A673 (cell line): ENCODE measurements at regions of chr4 and their contacts with region 1.

Region 1: DNA sequence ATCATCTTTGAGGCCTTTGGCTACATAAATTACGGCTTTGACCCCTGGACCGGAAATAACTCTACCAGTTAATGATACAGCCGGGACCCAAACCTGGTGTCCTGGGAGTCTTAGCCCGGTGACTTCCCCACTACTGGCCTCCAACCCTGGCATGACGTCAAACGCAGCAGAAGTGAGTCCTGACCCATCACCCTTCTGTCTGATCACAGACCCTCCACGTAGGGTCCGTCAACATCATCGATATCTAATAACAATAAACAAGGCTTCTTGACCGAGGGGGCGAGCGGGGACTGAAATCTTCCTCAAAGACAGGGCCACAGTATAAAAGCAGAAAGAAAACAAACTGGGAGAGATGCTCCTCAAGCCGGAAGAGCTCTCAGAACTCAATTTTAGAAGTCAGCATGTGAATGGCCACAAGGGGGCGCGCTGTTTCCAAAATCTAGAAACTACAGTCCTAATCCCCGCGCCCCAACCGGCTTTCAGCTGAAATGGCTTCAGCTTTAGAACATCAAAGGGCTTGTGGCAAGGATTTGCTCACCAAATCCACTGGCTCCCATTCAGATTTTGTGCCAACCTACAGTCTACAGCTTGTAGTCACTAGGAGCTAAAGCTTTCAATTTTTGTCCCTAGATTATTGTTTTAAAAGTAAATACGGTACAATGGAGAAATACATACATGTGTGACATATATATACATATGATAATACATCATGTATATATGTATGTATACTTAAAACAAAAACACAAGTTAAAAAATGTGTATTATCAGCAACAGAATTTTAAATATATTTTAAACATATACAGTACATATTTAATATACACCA is 46.4 kb upstream of the ENPP6 start:
- DNase-seq: peak; percentile 96
- H3K4me3 ChIP-seq: no peak overlapping the region
- H3K27ac ChIP-seq: no peak overlapping the region
- H3K4me1 ChIP-seq: peaks cover 23% of the 10 kb centered on the region
- H3K27me3 ChIP-seq: no peaks in the 10 kb centered on the region
- CTCF ChIP-seq: peak; percentile 90

Region 2: GRCh38 chr4:184287697-184288255 is 23.7 kb after region 1 on chr4:
- CTCF ChIA-PET with region 1: no interaction called
- POLR2A ChIA-PET with region 1: no interaction called
- intact Hi-C with region 1: no loop called
- DNase-seq: peak; percentile 55
- H3K4me3 ChIP-seq: no peak overlapping the region
- H3K27ac ChIP-seq: no peak overlapping the region
- H3K4me1 ChIP-seq: peaks cover 7% of the 10 kb centered on the region
- H3K27me3 ChIP-seq: no peaks in the 10 kb centered on the region
- CTCF ChIP-seq: peak; percentile 40; the same call in 1 of the 2 replicates

Region 3: GRCh38 chr4:184355111-184355604 is 91.0 kb after region 1 on chr4:
- CTCF ChIA-PET with region 1: interaction called, 8 read pairs
- POLR2A ChIA-PET with region 1: no interaction called
- intact Hi-C with region 1: loop called (anchors 5 kb)
- DNase-seq: peak; percentile 98
- H3K4me3 ChIP-seq: no peak overlapping the region
- H3K27ac ChIP-seq: peak overlapping the region; percentile 93
- H3K4me1 ChIP-seq: peaks cover 57% of the 10 kb centered on the region
- H3K27me3 ChIP-seq: no peaks in the 10 kb centered on the region
- CTCF ChIP-seq: no peak

Region 4: DNA sequence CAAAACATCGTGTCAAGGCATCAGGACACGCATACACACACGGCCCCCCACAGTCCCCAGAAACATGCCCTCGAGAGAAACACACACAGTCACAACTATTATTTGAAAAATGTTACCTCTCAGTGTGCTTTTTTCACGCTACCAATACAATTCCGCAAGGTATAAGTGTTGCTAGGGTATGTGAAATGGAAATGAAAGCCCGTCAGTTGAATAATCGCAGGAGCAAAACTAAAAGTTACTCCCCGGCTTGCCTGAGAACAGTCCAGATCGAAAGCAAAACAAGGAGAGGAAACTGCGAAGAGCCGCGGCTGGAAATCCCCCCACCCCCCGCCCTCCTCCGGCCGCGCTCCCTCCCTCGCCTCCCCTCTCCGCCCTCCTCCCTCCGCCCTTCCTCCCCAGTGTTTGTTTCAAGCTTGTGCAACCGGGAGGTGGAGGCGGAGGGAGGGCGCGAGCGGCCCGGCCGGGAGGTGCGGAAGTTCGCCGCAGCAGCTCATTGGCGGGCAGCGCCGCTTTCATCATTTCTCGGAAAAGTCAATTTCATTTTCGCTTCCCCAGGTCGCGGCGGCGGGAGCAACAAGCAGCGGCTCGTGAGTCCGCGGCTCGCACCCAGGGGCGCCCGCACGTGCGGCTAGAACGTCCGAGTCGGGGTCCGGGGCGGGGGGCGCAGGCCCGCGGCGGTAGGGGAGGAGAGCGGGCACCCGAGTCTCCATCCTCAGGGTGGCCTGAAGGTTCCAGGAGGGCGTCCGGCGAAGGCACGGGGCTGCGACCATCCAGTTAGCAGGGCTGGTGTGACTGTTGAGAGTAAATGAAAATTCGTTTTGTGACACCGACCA is 210.4 kb after region 1 on chr4 and contains the start of gene IRF2:
- CTCF ChIA-PET with region 1: interaction called, 4 read pairs
- POLR2A ChIA-PET with region 1: interaction called, 11 read pairs
- intact Hi-C with region 1: loop called (anchors 1 kb)
- DNase-seq: peak; percentile 99
- H3K4me3 ChIP-seq: peak within 1 kb of the TSS; percentile 91
- H3K27ac ChIP-seq: peak within 1 kb of the TSS; percentile 91
- H3K4me1 ChIP-seq: peaks cover 8% of the 10 kb centered on the region
- H3K27me3 ChIP-seq: no peaks in the 10 kb centered on the region
- CTCF ChIP-seq: no peak
- total RNA-seq, gene IRF2: 27.5 and 28.2 TPM in 2 replicates

Region 5: GRCh38 chr4:184649026-184649970 is 385.2 kb after region 1 on chr4 and contains the starts of genes CASP3 and PRIMPOL:
- CTCF ChIA-PET with region 1: no interaction called
- POLR2A ChIA-PET with region 1: interaction called, 4 read pairs
- intact Hi-C with region 1: loop called (anchors 1 kb)
- DNase-seq: peak; percentile 97
- H3K4me3 ChIP-seq: peak within 1 kb of the TSS; percentile 94
- H3K27ac ChIP-seq: peak within 1 kb of the TSS; percentile 93
- H3K4me1 ChIP-seq: peaks cover 42% of the 10 kb centered on the region
- H3K27me3 ChIP-seq: no peaks in the 10 kb centered on the region
- CTCF ChIP-seq: 0 out of 2 replicates have a peak, but pooled peaks have one; percentile 23
- total RNA-seq, gene CASP3: 52.6 and 65.5 TPM in 2 replicates
- total RNA-seq, gene PRIMPOL: 25.7 and 28.4 TPM in 2 replicates

Region 6: DNA sequence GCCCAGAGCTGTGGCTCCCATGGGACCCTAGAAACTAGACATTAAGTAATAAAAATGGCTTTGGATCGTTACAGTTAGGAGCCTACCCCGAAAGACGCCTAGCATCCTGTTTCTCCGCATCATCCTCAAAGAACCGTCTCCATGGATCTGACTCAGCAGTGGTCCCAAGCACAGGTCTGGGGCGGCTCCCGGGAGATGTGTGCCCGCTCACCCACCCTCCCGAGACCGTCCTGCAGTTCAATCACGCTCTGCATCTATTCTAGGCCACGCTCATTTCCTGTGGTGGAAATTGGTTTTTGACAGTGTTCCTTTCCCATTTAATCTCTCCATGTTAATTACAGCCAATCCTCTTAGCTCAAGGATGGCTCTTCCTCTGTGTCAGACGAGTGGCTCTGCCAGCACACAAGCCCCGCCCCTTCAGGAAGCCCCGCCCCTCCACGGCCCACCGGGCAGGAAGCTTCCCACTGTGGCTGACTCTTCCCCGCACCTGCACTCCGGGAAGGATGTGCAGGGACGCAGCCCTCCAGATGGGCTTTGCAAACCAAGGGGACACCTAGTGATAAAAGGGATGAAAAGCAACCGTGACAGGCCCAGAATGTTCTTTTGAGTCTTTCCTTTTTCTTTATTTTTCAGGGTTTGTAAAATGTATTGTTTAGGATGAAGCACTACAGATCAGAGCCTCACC is 719.7 kb after region 1 on chr4:
- CTCF ChIA-PET with region 1: no interaction called
- POLR2A ChIA-PET with region 1: interaction called, 3 read pairs
- intact Hi-C with region 1: loop called (anchors 10 kb)
- DNase-seq: peak; percentile 83
- H3K4me3 ChIP-seq: no peak overlapping the region
- H3K27ac ChIP-seq: no peak overlapping the region
- H3K4me1 ChIP-seq: peaks cover 5% of the 10 kb centered on the region
- H3K27me3 ChIP-seq: no peaks in the 10 kb centered on the region
- CTCF ChIP-seq: peak; percentile 56

Region 7: DNA sequence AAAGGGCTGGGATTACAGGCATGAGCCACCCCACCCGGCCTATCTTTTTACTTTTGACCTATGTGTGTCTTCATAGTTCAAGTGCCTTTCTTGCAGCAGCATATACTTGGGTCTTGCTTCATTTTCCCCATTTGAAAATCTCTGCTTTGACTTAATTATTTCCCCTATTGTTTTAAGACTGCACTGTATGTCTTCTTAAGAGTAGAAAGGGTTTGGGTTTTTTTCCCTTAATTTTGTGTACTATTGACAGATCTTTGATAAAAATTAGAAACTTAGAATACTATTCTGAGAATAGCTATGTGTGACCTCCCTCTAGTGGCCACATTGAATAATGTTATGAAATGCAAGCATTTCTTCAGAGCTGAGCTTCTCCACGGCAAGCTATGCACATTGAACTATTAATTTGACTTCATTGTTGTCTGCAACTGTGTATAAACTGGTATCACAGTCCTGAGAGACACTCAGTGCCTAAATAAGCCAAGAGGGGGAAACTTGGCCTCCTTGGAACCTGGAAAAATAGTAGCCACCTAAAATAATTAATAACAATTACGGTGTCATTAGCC is 870.3 kb after region 1 on chr4:
- CTCF ChIA-PET with region 1: interaction called, 3 read pairs
- POLR2A ChIA-PET with region 1: interaction called, 3 read pairs
- intact Hi-C with region 1: loop called (anchors 10 kb)
- DNase-seq: peak; percentile 63
- H3K4me3 ChIP-seq: no peak overlapping the region
- H3K27ac ChIP-seq: no peak overlapping the region
- H3K4me1 ChIP-seq: no peaks in the 10 kb centered on the region
- H3K27me3 ChIP-seq: no peaks in the 10 kb centered on the region
- CTCF ChIP-seq: peak; percentile 84